OCI-LY7 (cell line): ENCODE measurements at regions of chr14 and their contacts with region 1.

Region 1: GRCh38 chr14:89915114-89915878 is 39.2 kb downstream of the EFCAB11 start:
- DNase-seq: peak; percentile 68
- H3K4me3 ChIP-seq: no peak overlapping the region
- H3K27ac ChIP-seq: no peak overlapping the region
- H3K4me1 ChIP-seq: no peaks in the 10 kb centered on the region
- CTCF ChIP-seq: peak; percentile 99

Region 2: DNA sequence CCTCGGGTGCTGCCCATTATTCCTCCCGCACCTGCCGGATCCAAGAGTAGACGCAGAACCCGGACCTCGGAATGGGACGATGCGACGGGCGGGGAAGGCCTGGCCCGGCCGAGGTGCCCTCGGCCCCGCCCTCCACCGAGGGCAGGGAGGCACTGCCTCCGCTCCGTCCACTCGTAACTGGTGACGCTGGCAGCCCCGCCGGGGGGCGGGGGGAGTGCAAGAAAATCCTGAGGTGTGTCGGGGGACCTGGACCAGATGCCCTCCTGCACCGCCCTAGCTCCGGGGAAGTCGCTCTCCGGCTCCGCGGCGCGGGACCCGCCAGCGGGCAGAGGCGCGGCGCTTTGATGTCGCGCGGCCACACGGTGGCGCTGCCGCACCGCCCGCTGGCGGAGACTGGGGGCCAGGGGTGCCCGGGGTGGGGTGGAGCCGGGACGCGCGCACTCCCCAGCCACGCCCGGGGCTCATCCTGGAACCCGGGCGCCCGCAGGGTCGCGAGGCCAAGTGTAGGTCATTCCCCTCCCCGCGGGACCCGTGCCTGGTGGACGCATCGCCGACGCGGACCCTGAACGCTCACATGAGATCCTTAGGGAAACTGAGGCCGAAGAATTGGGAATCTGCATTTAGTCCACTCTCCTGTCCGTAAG is 888.1 kb before region 1 on chr14:
- CTCF ChIA-PET with region 1: no interaction called
- POLR2A ChIA-PET with region 1: no interaction called
- intact Hi-C with region 1: loop called (anchors 1 kb)
- DNase-seq: peak; percentile 49
- H3K4me3 ChIP-seq: peak overlapping the region; percentile 61
- H3K27ac ChIP-seq: no peak overlapping the region
- H3K4me1 ChIP-seq: peaks cover 4% of the 10 kb centered on the region
- CTCF ChIP-seq: peak; percentile 83

Region 3: GRCh38 chr14:89178802-89179535 is 736.3 kb before region 1 on chr14:
- CTCF ChIA-PET with region 1: no interaction called
- POLR2A ChIA-PET with region 1: no interaction called
- intact Hi-C with region 1: loop called (anchors 1 kb)
- DNase-seq: no peak
- H3K4me3 ChIP-seq: no peak overlapping the region
- H3K27ac ChIP-seq: no peak overlapping the region
- H3K4me1 ChIP-seq: peaks cover 10% of the 10 kb centered on the region
- CTCF ChIP-seq: no peak

Region 4: GRCh38 chr14:89773644-89774316 is 141.5 kb before region 1 on chr14:
- CTCF ChIA-PET with region 1: no interaction called
- POLR2A ChIA-PET with region 1: interaction called, 3 read pairs
- intact Hi-C with region 1: loop called (anchors 1 kb)
- DNase-seq: peak; percentile 85
- H3K4me3 ChIP-seq: peak overlapping the region; percentile 53
- H3K27ac ChIP-seq: peak overlapping the region; percentile 79
- H3K4me1 ChIP-seq: peaks cover 49% of the 10 kb centered on the region
- CTCF ChIP-seq: no peak

Region 5: GRCh38 chr14:89899917-89900663 is 15.2 kb before region 1 on chr14:
- CTCF ChIA-PET with region 1: no interaction called
- POLR2A ChIA-PET with region 1: no interaction called
- intact Hi-C with region 1: no loop called
- DNase-seq: peak; percentile 37
- H3K4me3 ChIP-seq: no peak overlapping the region
- H3K27ac ChIP-seq: no peak overlapping the region
- H3K4me1 ChIP-seq: peaks cover 3% of the 10 kb centered on the region
- CTCF ChIP-seq: peak; percentile 83